Caco-2 (cell line): ENCODE measurements at regions of chr3 and their contacts with region 1.

Region 1: DNA sequence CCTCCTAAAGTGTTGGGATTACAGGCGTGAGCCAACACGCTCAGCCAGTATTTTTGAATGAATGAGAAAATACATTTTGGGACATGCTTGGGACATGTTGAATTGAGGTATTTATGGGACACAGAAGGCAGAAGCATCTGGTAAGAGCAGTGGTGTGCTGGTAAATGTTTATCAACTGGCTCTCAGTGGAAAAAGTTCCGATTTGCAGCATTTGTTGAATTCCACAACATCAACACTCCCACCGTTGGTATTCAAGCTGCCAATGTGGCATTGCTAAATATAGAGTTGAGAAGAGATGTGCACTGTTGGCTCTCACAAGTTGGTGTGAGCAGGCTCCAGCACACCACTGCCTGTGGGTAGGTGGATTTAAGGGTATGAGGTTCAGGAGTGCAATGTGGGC is 35.8 kb upstream of the LRRFIP2 start:
- DNase-seq: no peak
- H3K4me3 ChIP-seq: no peak overlapping the region
- H3K4me3 Mint-ChIP-seq: no peak overlapping the region
- H3K27ac Mint-ChIP-seq: no peak overlapping the region
- H3K4me1 ChIP-seq: no peaks in the 10 kb centered on the region
- H3K4me1 Mint-ChIP-seq: no peaks in the 10 kb centered on the region
- H3K27me3 ChIP-seq: no peaks in the 10 kb centered on the region
- H3K27me3 Mint-ChIP-seq: no peaks in the 10 kb centered on the region
- CTCF ChIP-seq: no peak

Region 2: GRCh38 chr3:36843065-36844051 is 366.9 kb before region 1 on chr3:
- CTCF ChIA-PET with region 1: no interaction called
- POLR2A ChIA-PET with region 1: no interaction called
- intact Hi-C with region 1: no loop called
- DNase-seq: peak; percentile 37 to 41
- H3K4me3 ChIP-seq: no peak overlapping the region
- H3K4me3 Mint-ChIP-seq: no peak overlapping the region
- H3K27ac Mint-ChIP-seq: no peak overlapping the region
- H3K4me1 ChIP-seq: no peaks in the 10 kb centered on the region
- H3K4me1 Mint-ChIP-seq: no peaks in the 10 kb centered on the region
- H3K27me3 ChIP-seq: no peaks in the 10 kb centered on the region
- H3K27me3 Mint-ChIP-seq: no peaks in the 10 kb centered on the region
- CTCF ChIP-seq: peak; percentile 57 to 61

Region 3: DNA sequence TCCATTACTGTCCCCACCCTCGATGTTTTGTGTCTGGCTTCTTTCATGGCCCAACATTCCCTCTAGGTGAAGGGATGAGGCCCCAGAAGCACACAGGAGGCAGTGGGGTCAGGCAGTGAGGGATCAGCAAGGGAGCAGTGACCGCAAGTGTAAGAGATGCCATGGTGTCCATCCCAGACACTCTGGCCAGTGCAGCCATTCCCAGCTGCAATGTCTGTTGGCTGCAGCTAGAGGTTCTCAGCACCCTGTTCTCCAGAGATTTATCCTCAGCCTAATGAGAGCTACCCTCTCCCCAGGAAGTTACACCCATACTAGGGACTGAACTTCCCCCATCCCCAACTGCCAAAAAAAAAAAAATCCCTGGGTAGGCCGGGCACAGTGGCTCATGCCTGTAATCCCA is 305.6 kb before region 1 on chr3:
- CTCF ChIA-PET with region 1: no interaction called
- POLR2A ChIA-PET with region 1: no interaction called
- intact Hi-C with region 1: loop called (anchors 1 kb)
- DNase-seq: peak in 1 of 2 experiments; percentile 44
- H3K4me3 ChIP-seq: no peak overlapping the region
- H3K4me3 Mint-ChIP-seq: no peak overlapping the region
- H3K27ac Mint-ChIP-seq: no peak overlapping the region
- H3K4me1 ChIP-seq: 0 out of 2 replicates have a peak, but pooled peaks cover 8% of the 10 kb centered on the region
- H3K4me1 Mint-ChIP-seq: peaks cover 22% of the 10 kb centered on the region
- H3K27me3 ChIP-seq: no peaks in the 10 kb centered on the region
- H3K27me3 Mint-ChIP-seq: no peaks in the 10 kb centered on the region
- CTCF ChIP-seq: peak in 1 of 2 experiments; percentile 67

Region 4: DNA sequence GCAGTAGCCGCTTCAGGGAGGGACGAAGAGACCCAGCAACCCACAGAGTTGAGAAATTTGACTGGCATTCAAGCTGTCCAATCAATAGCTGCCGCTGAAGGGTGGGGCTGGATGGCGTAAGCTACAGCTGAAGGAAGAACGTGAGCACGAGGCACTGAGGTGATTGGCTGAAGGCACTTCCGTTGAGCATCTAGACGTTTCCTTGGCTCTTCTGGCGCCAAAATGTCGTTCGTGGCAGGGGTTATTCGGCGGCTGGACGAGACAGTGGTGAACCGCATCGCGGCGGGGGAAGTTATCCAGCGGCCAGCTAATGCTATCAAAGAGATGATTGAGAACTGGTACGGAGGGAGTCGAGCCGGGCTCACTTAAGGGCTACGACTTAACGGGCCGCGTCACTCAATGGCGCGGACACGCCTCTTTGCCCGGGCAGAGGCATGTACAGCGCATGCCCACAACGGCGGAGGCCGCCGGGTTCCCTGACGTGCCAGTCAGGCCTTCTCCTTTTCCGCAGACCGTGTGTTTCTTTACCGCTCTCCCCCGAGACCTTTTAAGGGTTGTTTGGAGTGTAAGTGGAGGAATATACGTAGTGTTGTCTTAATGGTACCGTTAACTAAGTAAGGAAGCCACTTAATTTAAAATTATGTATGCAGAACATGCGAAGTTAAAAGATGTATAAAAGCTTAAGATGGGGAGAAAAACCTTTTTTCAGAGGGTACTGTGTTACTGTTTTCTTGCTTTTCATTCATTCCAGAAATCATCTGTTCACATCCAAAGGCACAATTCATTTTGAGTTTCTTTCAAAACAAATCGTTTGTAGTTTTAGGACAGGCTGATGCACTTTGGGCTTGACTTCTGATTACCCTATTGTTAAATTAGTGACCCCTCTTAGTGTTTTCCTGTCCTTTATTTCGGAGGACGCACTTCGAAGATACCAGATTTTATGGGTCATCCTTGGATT is 216.6 kb before region 1 on chr3 and contains the start of gene MLH1:
- CTCF ChIA-PET with region 1: no interaction called
- POLR2A ChIA-PET with region 1: no interaction called
- intact Hi-C with region 1: loop called (anchors 1 kb)
- DNase-seq: peak; percentile 99 to 100
- H3K4me3 ChIP-seq: peak within 1 kb of the TSS; percentile 81
- H3K4me3 Mint-ChIP-seq: no peak within 1 kb of the TSS
- H3K27ac Mint-ChIP-seq: no peak within 1 kb of the TSS
- H3K4me1 ChIP-seq: no peaks in the 10 kb centered on the region
- H3K4me1 Mint-ChIP-seq: no peaks in the 10 kb centered on the region
- H3K27me3 ChIP-seq: no peaks in the 10 kb centered on the region
- H3K27me3 Mint-ChIP-seq: no peaks in the 10 kb centered on the region
- CTCF ChIP-seq: no peak
- total RNA-seq, gene MLH1: 49.6 and 51.0 TPM in 2 replicates

Region 5: GRCh38 chr3:37024092-37024491 is 186.1 kb before region 1 on chr3:
- CTCF ChIA-PET with region 1: no interaction called
- POLR2A ChIA-PET with region 1: no interaction called
- intact Hi-C with region 1: loop called (anchors 1 kb)
- DNase-seq: no peak
- H3K4me3 ChIP-seq: no peak overlapping the region
- H3K4me3 Mint-ChIP-seq: no peak overlapping the region
- H3K27ac Mint-ChIP-seq: no peak overlapping the region
- H3K4me1 ChIP-seq: no peaks in the 10 kb centered on the region
- H3K4me1 Mint-ChIP-seq: no peaks in the 10 kb centered on the region
- H3K27me3 ChIP-seq: no peaks in the 10 kb centered on the region
- H3K27me3 Mint-ChIP-seq: no peaks in the 10 kb centered on the region
- CTCF ChIP-seq: no peak

Region 6: DNA sequence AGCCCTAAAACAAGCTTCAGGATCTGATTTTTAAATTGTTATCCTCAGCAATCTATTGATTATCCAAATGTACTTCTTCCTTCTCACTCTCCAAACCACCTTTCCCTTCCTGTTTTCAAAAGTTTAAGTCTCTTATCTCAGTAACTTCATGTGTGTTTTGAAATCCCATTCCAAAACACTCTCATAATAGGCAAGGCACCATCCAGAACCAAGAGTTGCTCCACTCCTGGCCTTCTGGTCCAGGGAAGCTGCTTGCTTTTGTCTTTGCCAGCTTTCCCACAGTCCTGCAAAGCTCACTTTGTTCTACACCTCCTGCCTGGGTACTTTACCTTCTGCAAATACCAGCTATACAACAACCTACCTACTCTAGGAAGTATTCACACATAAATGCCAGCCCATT is 153.4 kb before region 1 on chr3:
- CTCF ChIA-PET with region 1: no interaction called
- POLR2A ChIA-PET with region 1: no interaction called
- intact Hi-C with region 1: loop called (anchors 5 kb)
- DNase-seq: no peak
- H3K4me3 ChIP-seq: no peak overlapping the region
- H3K4me3 Mint-ChIP-seq: no peak overlapping the region
- H3K27ac Mint-ChIP-seq: no peak overlapping the region
- H3K4me1 ChIP-seq: no peaks in the 10 kb centered on the region
- H3K4me1 Mint-ChIP-seq: no peaks in the 10 kb centered on the region
- H3K27me3 ChIP-seq: no peaks in the 10 kb centered on the region
- H3K27me3 Mint-ChIP-seq: no peaks in the 10 kb centered on the region
- CTCF ChIP-seq: no peak

Region 7: GRCh38 chr3:37221407-37221806 is 11.2 kb after region 1 on chr3:
- CTCF ChIA-PET with region 1: no interaction called
- POLR2A ChIA-PET with region 1: no interaction called
- intact Hi-C with region 1: loop called (anchors 1 kb)
- DNase-seq: peak; percentile 67 to 80
- H3K4me3 ChIP-seq: no peak overlapping the region
- H3K4me3 Mint-ChIP-seq: peak overlapping the region; percentile 56
- H3K27ac Mint-ChIP-seq: peak overlapping the region; percentile 89
- H3K4me1 ChIP-seq: peaks cover 40% of the 10 kb centered on the region
- H3K4me1 Mint-ChIP-seq: peaks cover 38% of the 10 kb centered on the region
- H3K27me3 ChIP-seq: no peaks in the 10 kb centered on the region
- H3K27me3 Mint-ChIP-seq: no peaks in the 10 kb centered on the region
- CTCF ChIP-seq: no peak